G401 (cell line): ENCODE measurements at regions of chr11 and their contacts with region 1.

Region 1: GRCh38 chr11:27705873-27706820 is 5.9 kb upstream of the BDNF start:
- DNase-seq: no peak

Region 2: DNA sequence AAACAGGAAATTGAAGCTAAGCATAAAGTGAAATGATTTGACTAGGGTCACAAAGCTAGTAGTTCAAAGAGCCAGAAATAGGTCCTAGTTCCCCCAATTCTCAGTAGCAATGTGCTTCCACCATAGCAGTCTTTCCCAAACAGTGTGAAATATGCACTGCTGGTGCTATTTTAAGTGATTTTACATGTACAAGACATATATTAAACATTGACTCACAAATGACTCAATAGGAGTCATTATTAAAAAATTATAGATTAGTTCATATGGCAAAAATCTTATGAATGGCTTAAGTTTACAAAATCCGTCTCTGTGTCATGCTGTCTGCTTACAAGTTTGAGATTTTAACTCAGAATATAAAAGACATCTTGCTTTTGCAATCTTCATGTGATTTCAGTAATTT is 380.4 kb after region 1 on chr11:
- in situ Hi-C with region 1: loop called (anchors 25 kb)
- DNase-seq: no peak